IMR-90 (cell line): ENCODE measurements at regions of chr2 and their contacts with region 1.

Region 1: DNA sequence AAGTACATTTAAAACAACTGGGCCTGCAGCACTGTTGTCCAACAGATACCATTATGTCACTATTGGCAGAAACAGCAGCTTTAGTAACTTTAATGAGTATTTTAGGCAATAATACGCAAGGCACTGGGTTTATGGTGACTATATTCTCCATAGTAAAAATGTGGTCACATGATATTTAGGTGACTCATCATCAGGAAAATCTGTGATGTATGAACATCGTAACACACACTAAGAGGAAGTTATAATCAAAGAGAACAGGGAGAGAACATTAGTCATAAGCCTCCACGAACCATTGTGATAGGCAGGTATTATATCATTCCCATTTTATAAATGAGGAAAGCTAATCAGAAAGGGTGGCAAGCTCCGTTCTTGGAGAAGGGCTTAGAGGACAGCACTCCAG is 36.9 kb downstream of the RAPH1 start:
- DNase-seq: peak; percentile 89
- ATAC-seq: peak; percentile 88
- H3K4me3 ChIP-seq: no peak overlapping the region
- H3K27ac ChIP-seq: no peak overlapping the region
- H3K4me1 ChIP-seq: peaks cover 1% of the 10 kb centered on the region
- H3K27me3 ChIP-seq: no peaks in the 10 kb centered on the region
- CTCF ChIP-seq: no peak
- POLR2A ChIP-seq: no peak
- RAD21 ChIP-seq: no peak

Region 2: GRCh38 chr2:201892516-201892915 is 1605.6 kb before region 1 on chr2:
- CTCF ChIA-PET with region 1: no interaction called
- POLR2A ChIA-PET with region 1: interaction called, 15 read pairs
- dilution Hi-C with region 1: no loop called
- in situ Hi-C with region 1: no loop called
- intact Hi-C with region 1: no loop called
- DNase-seq: no peak
- ATAC-seq: no peak
- H3K4me3 ChIP-seq: no peak overlapping the region
- H3K27ac ChIP-seq: no peak overlapping the region
- H3K4me1 ChIP-seq: peaks cover 18% of the 10 kb centered on the region
- H3K27me3 ChIP-seq: no peaks in the 10 kb centered on the region
- CTCF ChIP-seq: no peak
- POLR2A ChIP-seq: no peak
- RAD21 ChIP-seq: no peak

Region 3: DNA sequence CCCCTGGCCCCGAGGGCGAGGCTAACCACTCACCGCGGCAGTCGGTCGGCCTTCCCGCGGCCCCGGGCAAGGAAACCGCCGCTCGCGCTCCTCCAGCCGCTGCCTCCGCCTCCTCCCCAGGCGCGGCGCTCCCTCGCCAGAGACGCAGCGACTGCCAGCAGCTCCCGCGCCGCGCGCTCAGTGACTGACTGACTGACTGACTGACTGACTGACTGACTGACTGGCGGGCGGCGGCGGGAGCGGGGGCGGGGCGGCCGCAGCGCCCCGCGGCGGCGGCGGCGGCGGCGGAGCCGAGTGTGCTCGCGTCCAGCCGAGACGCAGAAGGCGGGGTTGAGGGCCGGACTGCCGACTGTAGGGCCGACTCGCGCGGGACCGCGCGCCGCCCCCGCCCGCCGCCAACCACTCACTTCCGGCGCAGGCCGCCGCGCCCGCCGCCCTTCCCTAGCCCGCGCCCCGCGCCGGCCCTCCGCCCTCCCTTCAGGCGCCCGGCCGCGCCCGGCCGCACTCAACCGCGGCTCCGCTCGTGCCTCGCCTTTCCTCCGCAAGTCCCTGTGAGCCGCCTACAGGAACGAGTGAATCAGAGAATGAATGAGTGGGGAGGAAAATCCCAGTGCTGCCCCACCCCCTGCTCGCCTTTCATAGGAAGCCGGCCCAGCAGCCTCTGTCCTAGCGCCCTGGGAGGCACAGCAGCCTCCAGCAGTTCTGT is 37.1 kb after region 1 on chr2 and contains the start of gene RAPH1:
- CTCF ChIA-PET with region 1: no interaction called
- POLR2A ChIA-PET with region 1: no interaction called
- dilution Hi-C with region 1: no loop called
- in situ Hi-C with region 1: no loop called
- intact Hi-C with region 1: loop called (anchors 5 kb)
- DNase-seq: peak; percentile 82
- ATAC-seq: peak; percentile 92
- H3K4me3 ChIP-seq: peak within 1 kb of the TSS; percentile 58
- H3K27ac ChIP-seq: peak within 1 kb of the TSS; percentile 90
- H3K4me1 ChIP-seq: no peaks in the 10 kb centered on the region; the same call in 1 of the 2 replicates
- H3K27me3 ChIP-seq: no peaks in the 10 kb centered on the region
- CTCF ChIP-seq: no peak
- POLR2A ChIP-seq: peak; percentile 83
- RAD21 ChIP-seq: no peak; the same call in 1 of the 2 replicates
- total RNA-seq, gene RAPH1: 13.1 and 15.1 TPM in 2 replicates

Region 4: DNA sequence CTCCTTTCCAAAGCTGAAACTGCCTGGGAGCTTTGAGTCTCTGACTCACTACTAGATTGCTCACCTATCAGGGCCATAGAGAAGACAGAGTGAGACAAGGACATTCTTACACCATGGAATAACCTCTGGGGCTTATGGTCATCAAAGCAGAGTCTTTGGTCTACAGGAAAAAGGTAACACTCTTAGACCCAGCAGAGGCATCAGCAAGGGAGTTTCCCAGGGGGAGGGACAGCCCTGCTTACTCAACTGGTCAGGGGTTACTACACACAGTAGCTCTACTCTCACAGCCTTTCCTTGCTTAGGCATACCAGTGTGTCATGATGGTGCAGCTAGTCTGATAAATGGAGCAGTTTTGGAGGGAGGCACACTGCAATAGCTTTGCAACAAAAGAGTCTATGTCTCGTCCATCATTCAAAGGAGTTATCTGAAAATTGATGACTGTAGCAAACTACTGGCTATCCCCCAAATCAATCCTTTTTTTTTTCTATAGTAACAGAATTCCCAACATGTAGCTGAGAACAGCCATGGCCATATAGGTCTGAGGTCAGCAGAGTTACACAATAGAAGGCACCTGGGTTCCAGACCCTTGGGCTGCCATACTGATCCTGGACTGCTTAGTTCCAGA is 185.9 kb after region 1 on chr2:
- CTCF ChIA-PET with region 1: no interaction called
- POLR2A ChIA-PET with region 1: no interaction called
- dilution Hi-C with region 1: no loop called
- in situ Hi-C with region 1: no loop called
- intact Hi-C with region 1: no loop called
- DNase-seq: peak; percentile 92
- ATAC-seq: peak; percentile 61
- H3K4me3 ChIP-seq: no peak overlapping the region
- H3K27ac ChIP-seq: no peak overlapping the region; the same call in 1 of the 2 replicates
- H3K4me1 ChIP-seq: peaks cover 28% of the 10 kb centered on the region
- H3K27me3 ChIP-seq: no peaks in the 10 kb centered on the region
- CTCF ChIP-seq: no peak
- POLR2A ChIP-seq: peak; percentile 51; the same call in 1 of the 2 replicates
- RAD21 ChIP-seq: no peak